T-cell (primary cell): ENCODE measurements at regions of chr2 and their contacts with region 1.

Region 1: DNA sequence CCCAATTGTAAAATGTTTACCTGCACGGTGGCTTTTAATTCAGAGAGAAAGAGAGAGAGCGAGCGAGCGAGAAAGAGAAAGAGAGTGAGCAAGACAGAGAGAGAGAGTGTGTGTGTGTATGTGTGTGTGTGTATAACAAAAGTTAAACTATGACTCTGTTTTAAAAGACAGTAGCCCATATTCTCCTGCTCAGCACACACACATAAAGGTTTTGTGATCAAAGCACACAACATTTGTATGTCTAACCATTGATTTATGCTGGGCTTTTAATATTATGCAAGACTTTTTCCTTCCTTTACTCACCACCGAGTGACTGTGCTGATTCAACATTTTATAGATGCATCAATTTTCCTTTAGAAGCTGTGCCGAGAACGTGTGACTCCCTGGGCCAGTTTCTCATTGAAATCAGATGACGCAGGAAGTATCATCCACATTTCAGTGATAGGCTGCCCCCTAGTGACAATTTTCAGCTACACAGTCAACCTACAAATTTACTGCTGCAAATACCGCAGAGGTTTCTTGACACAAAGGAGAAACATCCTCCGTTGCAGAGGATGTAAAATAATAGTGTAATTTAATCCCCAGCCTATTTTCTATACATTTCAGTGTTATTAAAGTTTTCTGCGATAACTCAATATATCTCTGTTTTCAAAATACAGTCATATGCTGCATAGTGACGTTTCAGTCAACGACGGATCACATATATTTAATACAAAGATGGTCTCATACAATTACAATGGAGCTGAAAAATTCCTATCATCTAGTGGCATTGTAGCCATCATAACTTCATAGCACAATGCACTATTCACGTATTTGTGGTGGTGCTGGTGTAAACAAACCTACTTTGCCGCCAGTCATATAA is 165.9 kb upstream of the TANK start:
- DNase-seq: peak; percentile 15 to 87 (median 59)
- ATAC-seq: peak; percentile 80 to 96 (median 87)
- H3K4me3 ChIP-seq: no peak overlapping the region
- H3K4me3 Mint-ChIP-seq: peak overlapping the region in 1 of 3 donors; percentile 45
- H3K27ac ChIP-seq: no peak overlapping the region
- H3K27ac Mint-ChIP-seq: no peak overlapping the region
- H3K4me1 ChIP-seq: no peaks in the 10 kb centered on the region
- H3K4me1 Mint-ChIP-seq: peaks cover 11 to 13% (median 11%) of the 10 kb centered on the region in 3 donors
- H3K27me3 ChIP-seq: no peaks in the 10 kb centered on the region
- H3K27me3 Mint-ChIP-seq: no peaks in the 10 kb centered on the region

Region 2: GRCh38 chr2:160109936-160110673 is 884.3 kb before region 1 on chr2:
- CTCF ChIA-PET with region 1: interaction called, 16 to 21 read pairs
- POLR2A ChIA-PET with region 1: no interaction called
- DNase-seq: peak in 33 of 35 experiments; percentile 8 to 78 (median 37)
- ATAC-seq: peak in 3 of 4 experiments; percentile 50 to 71 (median 52)
- H3K4me3 ChIP-seq: no peak overlapping the region
- H3K4me3 Mint-ChIP-seq: no peak overlapping the region
- H3K27ac ChIP-seq: no peak overlapping the region
- H3K27ac Mint-ChIP-seq: no peak overlapping the region
- H3K4me1 ChIP-seq: no peaks in the 10 kb centered on the region
- H3K4me1 Mint-ChIP-seq: no peaks in the 10 kb centered on the region
- H3K27me3 ChIP-seq: no peaks in the 10 kb centered on the region
- H3K27me3 Mint-ChIP-seq: peaks cover 5 to 19% of the 10 kb centered on the region in 2 donors

Region 3: DNA sequence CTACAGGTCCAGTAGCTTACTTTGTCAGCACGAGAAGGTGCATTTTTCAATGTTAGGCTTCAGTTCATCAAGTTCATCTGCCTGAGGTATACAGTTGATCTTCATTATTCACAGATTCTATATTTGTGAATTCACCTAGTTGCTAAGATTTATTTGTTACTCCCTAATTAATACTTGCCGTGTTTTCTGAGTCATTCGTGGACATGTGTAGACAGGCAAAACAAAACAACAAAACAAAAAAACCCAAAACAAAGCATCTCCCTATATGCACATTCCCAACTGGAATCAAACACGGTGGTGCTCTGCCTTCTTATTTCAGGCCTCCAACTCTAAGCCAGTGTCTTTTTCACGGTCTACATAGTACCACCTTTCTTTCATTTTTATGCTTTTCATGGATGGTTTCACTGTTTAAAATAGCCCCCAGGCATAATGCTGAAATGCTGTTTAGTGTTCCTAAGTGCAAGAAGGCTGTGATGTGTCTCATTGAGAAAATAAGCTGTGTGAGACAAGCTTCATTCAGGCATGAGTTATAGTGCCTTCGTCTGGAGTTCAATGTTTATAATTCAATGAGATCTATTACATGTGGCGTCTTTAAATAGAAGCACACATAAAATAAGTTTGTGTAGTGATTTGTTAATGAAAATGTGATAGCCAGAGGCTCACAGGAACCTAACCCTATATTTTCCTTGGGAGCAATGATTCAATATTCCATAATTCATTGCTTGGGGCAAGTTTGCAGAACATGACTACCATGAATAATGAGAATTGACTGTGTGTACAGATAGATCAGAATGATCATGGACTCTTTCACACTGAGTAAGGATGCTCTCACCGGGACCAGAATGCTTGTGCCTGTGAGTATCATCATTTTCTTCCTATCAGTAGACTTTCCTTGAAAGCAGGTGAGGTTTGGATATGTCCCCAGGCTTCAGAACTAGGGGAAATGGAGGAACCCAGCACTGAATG is 818.9 kb before region 1 on chr2:
- CTCF ChIA-PET with region 1: no interaction called
- POLR2A ChIA-PET with region 1: interaction called in 1 of 2 experiments, 18 read pairs
- DNase-seq: no peak
- ATAC-seq: no peak
- H3K4me3 ChIP-seq: no peak overlapping the region
- H3K4me3 Mint-ChIP-seq: no peak overlapping the region
- H3K27ac ChIP-seq: no peak overlapping the region
- H3K27ac Mint-ChIP-seq: no peak overlapping the region
- H3K4me1 ChIP-seq: peaks cover 0 to under 1% of the 10 kb centered on the region in 2 experiments
- H3K4me1 Mint-ChIP-seq: no peaks in the 10 kb centered on the region
- H3K27me3 ChIP-seq: no peaks in the 10 kb centered on the region
- H3K27me3 Mint-ChIP-seq: no peaks in the 10 kb centered on the region

Region 4: DNA sequence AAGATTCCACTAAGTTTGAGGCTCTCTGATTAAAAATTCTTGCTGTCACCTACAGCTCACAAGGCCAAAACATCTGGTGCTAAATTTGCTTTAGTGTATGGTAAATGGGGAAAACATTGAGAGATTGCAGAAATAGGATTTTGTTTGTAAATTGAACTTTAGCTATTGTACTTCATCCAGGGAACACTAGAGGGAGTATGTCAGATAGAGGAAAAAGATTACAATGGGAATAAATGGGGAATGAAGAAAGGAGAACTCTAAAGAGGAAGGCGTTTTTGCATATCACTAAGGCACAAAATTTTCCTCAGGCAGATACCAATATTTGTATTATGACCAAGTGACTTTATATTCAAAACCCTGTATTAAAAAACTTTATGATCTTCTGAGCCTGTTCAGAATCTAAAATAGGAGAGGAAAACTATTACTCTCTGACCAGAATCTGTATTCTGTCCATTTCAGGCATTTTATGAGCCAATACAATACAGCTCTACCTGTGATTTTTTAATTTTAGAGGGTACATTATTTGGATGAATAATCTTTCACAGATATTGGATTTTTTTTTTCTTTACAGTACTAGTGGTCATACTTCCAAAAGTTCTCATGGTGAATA is 742.0 kb before region 1 on chr2:
- CTCF ChIA-PET with region 1: interaction called, 8 to 37 read pairs
- POLR2A ChIA-PET with region 1: interaction called in 1 of 2 experiments, 3 read pairs
- DNase-seq: peak in 1 of 35 experiments; percentile 52
- ATAC-seq: no peak
- H3K4me3 ChIP-seq: no peak overlapping the region
- H3K4me3 Mint-ChIP-seq: no peak overlapping the region
- H3K27ac ChIP-seq: no peak overlapping the region
- H3K27ac Mint-ChIP-seq: no peak overlapping the region
- H3K4me1 ChIP-seq: no peaks in the 10 kb centered on the region
- H3K4me1 Mint-ChIP-seq: no peaks in the 10 kb centered on the region
- H3K27me3 ChIP-seq: no peaks in the 10 kb centered on the region
- H3K27me3 Mint-ChIP-seq: no peaks in the 10 kb centered on the region

Region 5: DNA sequence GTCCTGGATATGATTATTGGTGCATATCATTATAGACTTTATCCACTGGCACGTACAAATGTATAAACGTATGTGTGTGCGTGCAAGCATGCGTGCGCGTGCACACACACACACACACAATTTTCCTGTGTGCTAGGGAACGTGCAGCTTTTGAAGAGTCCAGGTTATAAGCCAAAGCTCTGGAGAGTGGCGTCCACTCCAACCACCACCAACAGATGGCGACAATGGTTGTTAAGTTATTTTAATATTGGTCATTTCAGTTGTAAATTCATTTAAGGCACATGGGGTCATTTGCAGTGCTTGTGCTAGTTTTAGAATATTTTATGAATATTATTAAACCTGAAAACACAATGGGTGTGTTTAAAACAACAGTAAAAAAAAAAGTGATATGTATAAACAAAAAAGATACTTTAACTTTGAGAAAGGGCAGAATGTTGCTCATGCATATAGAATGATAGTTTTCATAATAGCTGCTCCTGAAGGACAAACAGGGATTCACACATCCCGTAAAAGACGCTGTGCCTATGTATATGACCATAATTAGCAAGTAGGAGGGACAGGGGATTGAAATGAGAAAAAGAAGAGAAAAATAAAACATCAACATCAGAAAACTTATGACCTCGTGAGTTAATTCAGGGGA is 670.1 kb before region 1 on chr2:
- CTCF ChIA-PET with region 1: interaction called, 6 to 29 read pairs
- POLR2A ChIA-PET with region 1: no interaction called
- DNase-seq: peak in 30 of 35 experiments; percentile 4 to 61 (median 32)
- ATAC-seq: no peak
- H3K4me3 ChIP-seq: no peak overlapping the region
- H3K4me3 Mint-ChIP-seq: no peak overlapping the region
- H3K27ac ChIP-seq: no peak overlapping the region
- H3K27ac Mint-ChIP-seq: no peak overlapping the region
- H3K4me1 ChIP-seq: peaks cover 28 to 47% of the 10 kb centered on the region in 2 experiments
- H3K4me1 Mint-ChIP-seq: peaks cover 93 to 96% (median 94%) of the 10 kb centered on the region in 3 donors
- H3K27me3 ChIP-seq: no peaks in the 10 kb centered on the region
- H3K27me3 Mint-ChIP-seq: no peaks in the 10 kb centered on the region

Region 6: DNA sequence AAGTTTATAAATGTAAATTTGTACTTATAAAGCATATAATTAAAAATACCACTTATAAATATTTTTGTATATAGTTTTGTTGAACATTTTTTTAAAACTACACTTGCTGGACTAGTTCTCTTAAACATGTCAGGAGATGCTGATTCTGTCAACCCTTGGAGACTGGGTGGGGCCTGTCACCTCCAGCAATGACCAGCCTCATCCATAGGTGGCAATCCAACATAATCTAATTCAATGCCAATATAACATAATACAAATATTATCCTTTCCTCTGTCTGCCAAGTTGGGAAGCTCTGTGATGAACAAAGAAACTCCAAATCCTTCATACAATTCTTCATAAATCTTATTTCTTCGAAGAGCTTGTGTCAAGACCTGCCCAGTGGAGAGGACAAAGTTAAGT is 641.2 kb before region 1 on chr2:
- CTCF ChIA-PET with region 1: interaction called, 5 to 14 read pairs
- POLR2A ChIA-PET with region 1: no interaction called
- DNase-seq: peak in 25 of 35 experiments; percentile 8 to 62 (median 23)
- ATAC-seq: peak; percentile 56 to 83 (median 66)
- H3K4me3 ChIP-seq: no peak overlapping the region
- H3K4me3 Mint-ChIP-seq: no peak overlapping the region
- H3K27ac ChIP-seq: no peak overlapping the region
- H3K27ac Mint-ChIP-seq: no peak overlapping the region
- H3K4me1 ChIP-seq: peaks cover 5 to 21% of the 10 kb centered on the region in 2 experiments
- H3K4me1 Mint-ChIP-seq: peaks cover 66 to 83% (median 81%) of the 10 kb centered on the region in 3 donors
- H3K27me3 ChIP-seq: no peaks in the 10 kb centered on the region
- H3K27me3 Mint-ChIP-seq: no peaks in the 10 kb centered on the region

Region 7: DNA sequence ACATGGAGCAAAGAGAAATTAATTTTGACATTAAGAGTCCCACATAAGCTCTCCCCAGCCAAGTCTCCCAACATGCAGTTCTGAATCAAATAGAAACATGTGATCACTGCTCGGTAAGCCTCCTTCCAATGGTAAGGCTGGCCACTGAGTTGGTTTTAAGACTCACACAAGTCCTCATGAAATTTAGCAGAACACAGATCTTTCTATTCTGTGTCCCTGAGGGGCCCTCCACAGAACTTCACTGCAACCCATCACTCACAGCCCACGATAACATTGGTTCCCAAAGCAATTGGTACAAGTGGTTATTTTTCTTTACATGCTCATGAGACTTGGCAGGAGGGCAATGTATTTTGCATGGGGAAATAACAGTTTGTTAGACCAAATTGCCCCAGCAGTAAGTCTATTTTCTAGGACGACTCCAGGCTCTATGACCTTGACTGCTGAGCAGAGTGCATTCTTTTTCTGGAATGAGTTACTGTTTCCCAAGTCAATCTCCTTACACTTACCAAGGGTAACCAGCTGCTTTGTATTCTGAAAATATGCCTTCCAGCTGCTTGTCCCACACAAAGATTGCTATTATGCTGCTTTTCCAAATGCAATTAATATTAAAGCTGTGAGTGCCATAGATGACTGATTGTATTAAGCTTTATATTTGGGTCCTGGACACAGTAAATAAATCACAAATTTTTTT is 23.6 kb after region 1 on chr2:
- CTCF ChIA-PET with region 1: no interaction called
- POLR2A ChIA-PET with region 1: no interaction called
- DNase-seq: no peak
- ATAC-seq: no peak
- H3K4me3 ChIP-seq: no peak overlapping the region
- H3K4me3 Mint-ChIP-seq: no peak overlapping the region
- H3K27ac ChIP-seq: no peak overlapping the region
- H3K27ac Mint-ChIP-seq: no peak overlapping the region
- H3K4me1 ChIP-seq: no peaks in the 10 kb centered on the region
- H3K4me1 Mint-ChIP-seq: no peaks in the 10 kb centered on the region
- H3K27me3 ChIP-seq: no peaks in the 10 kb centered on the region
- H3K27me3 Mint-ChIP-seq: peaks cover 3 to 11% of the 10 kb centered on the region in 2 donors

Region 8: DNA sequence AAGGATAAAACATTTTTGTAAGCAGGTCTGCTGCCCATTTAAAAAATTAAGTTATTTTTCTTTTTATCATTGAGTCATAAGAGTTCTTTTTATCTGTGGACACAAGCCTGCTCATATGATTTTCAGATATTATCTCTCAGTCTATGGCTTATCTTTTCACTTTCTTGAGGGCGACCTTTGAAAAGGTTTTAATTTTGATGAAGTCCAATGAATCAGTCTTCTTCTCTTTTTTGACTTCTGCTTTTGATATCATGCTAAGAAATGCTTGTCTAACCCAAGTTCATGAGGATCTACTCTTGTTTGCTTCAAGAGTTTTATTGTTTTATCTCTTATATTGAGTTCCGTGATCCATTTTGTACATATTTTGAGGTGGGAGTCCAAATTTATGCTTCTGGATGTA is 350.3 kb after region 1 on chr2:
- CTCF ChIA-PET with region 1: no interaction called
- POLR2A ChIA-PET with region 1: no interaction called
- DNase-seq: no peak
- ATAC-seq: no peak
- H3K4me3 ChIP-seq: no peak overlapping the region
- H3K4me3 Mint-ChIP-seq: no peak overlapping the region
- H3K27ac ChIP-seq: no peak overlapping the region
- H3K27ac Mint-ChIP-seq: no peak overlapping the region
- H3K4me1 ChIP-seq: no peaks in the 10 kb centered on the region
- H3K4me1 Mint-ChIP-seq: peaks cover 28 to 33% (median 32%) of the 10 kb centered on the region in 3 donors
- H3K27me3 ChIP-seq: no peaks in the 10 kb centered on the region
- H3K27me3 Mint-ChIP-seq: no peaks in the 10 kb centered on the region